AG04450 (cell line): ENCODE measurements at regions of chr14 and their contacts with region 1.

Region 1: DNA sequence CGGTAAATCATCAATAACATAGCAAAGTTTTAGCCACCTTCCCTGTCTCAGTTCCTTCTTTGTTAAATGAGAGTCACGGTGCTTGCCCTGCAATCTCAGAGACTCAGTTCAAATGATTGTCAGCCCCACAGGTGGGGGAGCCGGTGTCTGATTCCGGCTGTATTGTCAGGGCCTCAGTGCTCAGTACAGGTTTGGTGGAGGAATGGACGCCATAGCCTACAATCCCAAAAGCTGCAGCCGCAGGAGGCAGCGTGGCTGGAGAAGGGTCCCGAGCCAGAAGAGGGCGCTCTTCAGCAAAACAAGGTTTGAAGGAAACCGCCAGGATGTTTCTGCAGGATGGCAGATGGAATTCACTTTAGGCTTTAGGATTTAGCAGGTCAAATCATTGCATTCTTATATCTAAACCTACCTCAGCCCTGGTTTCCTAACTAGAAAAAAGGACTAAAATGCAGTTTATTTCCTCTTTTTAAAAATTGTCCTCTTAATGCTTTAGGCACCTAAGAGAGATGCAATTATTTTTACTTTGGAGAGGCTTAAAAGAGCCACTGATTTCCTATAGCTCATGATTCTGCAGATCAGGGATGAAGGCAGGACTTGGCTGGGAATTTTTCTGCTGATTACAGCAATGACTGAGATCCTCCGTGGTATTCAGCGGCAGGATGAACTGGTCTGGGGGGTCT is 29.2 kb downstream of the FOS start:
- DNase-seq: no peak
- H3K4me3 ChIP-seq: no peak overlapping the region
- H3K27ac ChIP-seq: no peak overlapping the region
- H3K27me3 ChIP-seq: no peaks in the 10 kb centered on the region
- CTCF ChIP-seq: peak; percentile 96

Region 2: DNA sequence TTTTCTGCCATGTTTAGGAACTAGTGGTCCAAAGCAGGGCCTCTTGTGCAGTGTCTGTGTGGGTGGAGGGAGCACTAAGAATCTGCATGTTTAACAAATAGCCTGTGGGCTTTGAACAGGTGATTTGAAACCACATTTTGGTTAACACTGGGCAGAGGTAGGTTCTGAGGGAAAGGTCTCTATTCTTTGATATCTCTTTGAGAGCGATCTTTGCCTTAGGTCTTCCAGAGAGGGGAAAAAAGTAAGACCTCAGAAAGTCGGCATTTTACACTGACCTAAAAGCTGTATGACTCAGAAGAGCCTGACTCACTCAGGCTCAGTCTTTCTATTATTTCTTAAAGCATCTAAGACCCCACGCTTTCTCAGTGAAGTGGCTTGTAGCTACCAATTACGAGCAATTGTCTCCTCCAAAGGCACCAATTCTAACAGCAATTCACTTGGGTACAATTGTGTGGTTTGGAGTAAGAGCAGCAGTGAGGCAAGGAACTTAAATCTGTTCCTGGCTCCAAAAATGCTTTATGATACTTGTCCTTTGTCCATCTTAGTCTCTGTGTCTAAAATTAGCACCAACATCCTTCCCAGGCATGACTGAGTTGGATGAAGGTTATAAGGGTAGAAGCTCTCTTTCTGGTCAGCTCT is 296.4 kb before region 1 on chr14:
- CTCF ChIA-PET with region 1: no interaction called
- POLR2A ChIA-PET with region 1: no interaction called
- DNase-seq: no peak
- H3K4me3 ChIP-seq: no peak overlapping the region; the same call in 1 of the 2 replicates
- H3K27ac ChIP-seq: peak overlapping the region; percentile 66
- H3K27me3 ChIP-seq: no peaks in the 10 kb centered on the region
- CTCF ChIP-seq: no peak

Region 3: GRCh38 chr14:75132382-75133086 is 175.3 kb before region 1 on chr14:
- CTCF ChIA-PET with region 1: interaction called, 90 read pairs
- POLR2A ChIA-PET with region 1: interaction called, 5 read pairs
- DNase-seq: no peak
- H3K4me3 ChIP-seq: no peak overlapping the region
- H3K27ac ChIP-seq: no peak overlapping the region
- H3K27me3 ChIP-seq: no peaks in the 10 kb centered on the region
- CTCF ChIP-seq: peak; percentile 78

Region 4: DNA sequence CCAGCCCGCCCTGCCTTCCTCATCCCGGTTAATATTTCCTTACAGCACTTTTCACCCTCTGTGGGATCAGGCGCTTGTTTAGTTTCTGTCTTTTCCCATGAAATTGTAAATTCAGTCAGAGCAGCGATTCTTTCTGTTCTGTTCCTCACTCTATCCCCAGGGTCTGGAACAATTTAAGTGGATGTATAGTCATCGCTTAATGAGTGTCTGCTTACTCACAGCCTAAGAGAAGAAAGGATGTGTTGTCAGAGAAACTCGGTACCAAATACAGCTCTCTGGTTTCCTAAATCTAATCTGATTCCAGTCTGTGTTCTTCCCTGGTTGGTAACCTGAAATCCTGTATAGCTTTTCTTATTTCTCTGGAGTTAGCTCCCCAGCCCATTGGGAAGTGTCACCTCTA is 15.7 kb after region 1 on chr14:
- CTCF ChIA-PET with region 1: no interaction called
- POLR2A ChIA-PET with region 1: no interaction called
- DNase-seq: no peak
- H3K4me3 ChIP-seq: no peak overlapping the region
- H3K27ac ChIP-seq: no peak overlapping the region
- H3K27me3 ChIP-seq: peaks cover 29% of the 10 kb centered on the region
- CTCF ChIP-seq: no peak

Region 5: DNA sequence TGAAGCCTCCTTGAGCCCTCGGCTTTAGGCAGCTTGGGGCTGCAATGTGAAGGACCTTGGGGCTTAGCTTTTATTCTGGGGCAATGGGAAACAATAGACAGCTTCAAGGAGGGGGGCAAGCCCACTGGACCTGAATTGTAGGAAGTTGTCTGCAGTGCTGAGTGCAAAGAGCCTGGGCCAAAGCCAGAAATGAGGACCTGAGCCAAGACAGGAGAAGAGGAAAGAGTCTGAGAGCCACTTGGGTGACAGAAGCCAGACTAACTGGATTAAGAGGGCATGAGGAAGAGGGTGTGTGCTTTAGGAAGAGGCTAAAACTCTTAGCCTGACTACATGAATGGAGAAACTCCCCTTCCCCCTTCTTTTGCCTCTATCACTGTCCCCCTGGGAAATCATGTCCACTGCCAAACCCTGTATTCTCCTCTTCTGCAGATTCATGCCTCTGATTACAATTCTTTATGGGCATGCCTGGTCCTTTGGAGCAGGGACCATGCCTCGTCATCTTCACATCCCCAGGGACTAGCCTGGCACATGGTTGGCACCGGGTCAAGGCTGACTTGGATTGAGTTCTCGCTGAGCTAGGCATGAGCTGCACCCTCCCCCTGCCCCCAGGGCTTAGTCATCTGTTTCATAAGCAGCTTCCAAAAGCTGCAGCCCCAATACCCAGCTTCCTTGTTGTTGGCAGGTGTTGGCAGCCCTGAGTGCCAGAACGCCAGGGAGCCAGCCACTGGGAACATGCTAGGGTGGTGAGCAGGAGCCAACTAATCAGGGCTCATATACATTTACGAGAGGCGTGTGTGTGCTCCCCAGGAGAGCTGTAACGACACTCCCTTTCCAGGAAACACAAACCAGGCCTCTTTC is 92.2 kb after region 1 on chr14:
- CTCF ChIA-PET with region 1: no interaction called
- POLR2A ChIA-PET with region 1: no interaction called
- DNase-seq: no peak
- H3K4me3 ChIP-seq: no peak overlapping the region
- H3K27ac ChIP-seq: no peak overlapping the region
- H3K27me3 ChIP-seq: peaks cover 24% of the 10 kb centered on the region
- CTCF ChIP-seq: no peak

Region 6: GRCh38 chr14:75492832-75493579 is 185.2 kb after region 1 on chr14:
- CTCF ChIA-PET with region 1: interaction called, 155 read pairs
- POLR2A ChIA-PET with region 1: no interaction called
- DNase-seq: no peak
- H3K4me3 ChIP-seq: no peak overlapping the region
- H3K27ac ChIP-seq: no peak overlapping the region
- H3K27me3 ChIP-seq: peaks cover 6% of the 10 kb centered on the region
- CTCF ChIP-seq: no peak